Heart right ventricle (tissue), 16 donors: ENCODE measurements at regions of chr18 and their contacts with region 1.

Region 1: DNA sequence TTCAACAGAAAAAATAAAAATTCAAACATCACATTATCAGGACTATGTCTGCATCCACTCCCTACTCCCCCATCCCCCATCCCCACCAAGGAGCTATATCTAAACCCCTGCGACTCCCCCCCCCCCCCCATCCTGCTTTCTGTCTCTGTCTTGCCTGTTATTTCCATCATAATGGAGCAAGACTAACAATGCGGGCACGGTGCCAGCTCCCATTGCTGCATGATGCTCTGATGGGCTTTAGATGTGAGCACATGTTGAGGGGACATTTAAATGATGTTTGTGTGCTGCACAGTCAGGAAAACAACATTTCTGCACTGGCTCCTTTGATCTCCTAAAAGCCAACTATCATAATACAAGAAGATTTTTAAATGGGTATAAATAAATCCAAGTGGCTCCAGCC is 644.2 kb upstream of the SETBP1 start:
- DNase-seq: peak; percentile 8 to 30
- ATAC-seq: no peak
- H3K4me3 ChIP-seq: no peak overlapping the region
- H3K27ac ChIP-seq: no peak overlapping the region
- H3K4me1 ChIP-seq: no peaks in the 10 kb centered on the region
- H3K27me3 ChIP-seq: no peaks in the 10 kb centered on the region
- CTCF ChIP-seq: no peak

Region 2: GRCh38 chr18:43981229-43981628 is 55.3 kb before region 1 on chr18:
- intact Hi-C with region 1: no loop called
- DNase-seq: no peak
- ATAC-seq: no peak
- H3K4me3 ChIP-seq: no peak overlapping the region
- H3K27ac ChIP-seq: no peak overlapping the region
- H3K4me1 ChIP-seq: no peaks in the 10 kb centered on the region
- H3K27me3 ChIP-seq: no peaks in the 10 kb centered on the region
- CTCF ChIP-seq: no peak

Region 3: DNA sequence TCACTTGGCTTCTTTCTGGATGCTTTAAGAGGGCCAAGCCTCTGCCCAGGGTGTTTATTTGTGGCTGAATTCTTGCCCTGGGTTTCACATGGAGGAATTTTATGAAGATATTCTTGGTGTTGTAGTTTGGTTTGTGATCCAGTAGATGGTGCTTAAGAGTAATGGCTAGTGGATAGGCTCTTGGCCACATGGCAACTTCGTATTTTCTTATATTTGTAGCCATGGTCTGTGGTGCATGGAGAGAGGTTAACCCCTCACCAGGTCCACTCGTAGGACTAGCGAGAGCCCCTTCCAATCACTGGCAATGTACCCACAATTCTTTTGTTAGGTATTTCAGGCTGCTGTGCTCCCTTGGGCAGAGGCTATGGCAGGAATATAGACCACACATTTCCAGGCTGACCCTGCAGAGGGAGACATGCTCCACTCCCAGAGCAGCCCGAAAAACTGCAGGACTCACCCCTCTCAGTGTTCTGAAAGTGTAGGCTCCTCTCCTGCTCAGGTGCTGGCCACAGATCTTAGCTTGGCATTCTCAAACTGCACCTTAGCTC is 62.1 kb after region 1 on chr18:
- intact Hi-C with region 1: loop called in 1 of 10 experiments (anchors 10 kb)
- DNase-seq: no peak
- ATAC-seq: peak in 2 of 8 donors; percentile 33 to 54
- H3K4me3 ChIP-seq: no peak overlapping the region
- H3K27ac ChIP-seq: no peak overlapping the region
- H3K4me1 ChIP-seq: no peaks in the 10 kb centered on the region
- H3K27me3 ChIP-seq: no peaks in the 10 kb centered on the region
- CTCF ChIP-seq: peak in 4 of 9 donors; percentile 13 to 43 (median 32)

Region 4: GRCh38 chr18:44458777-44459176 is 422.3 kb after region 1 on chr18:
- intact Hi-C with region 1: no loop called
- DNase-seq: no peak
- ATAC-seq: no peak
- H3K4me3 ChIP-seq: no peak overlapping the region
- H3K27ac ChIP-seq: no peak overlapping the region
- H3K4me1 ChIP-seq: no peaks in the 10 kb centered on the region
- H3K27me3 ChIP-seq: no peaks in the 10 kb centered on the region
- CTCF ChIP-seq: no peak